Activated CD4-positive, alpha-beta memory T cell treated with anti-CD3 and anti-CD28 coated beads for 36 hours (primary cell): ENCODE measurements at regions of chr2 and their contacts with region 1.

Region 1: DNA sequence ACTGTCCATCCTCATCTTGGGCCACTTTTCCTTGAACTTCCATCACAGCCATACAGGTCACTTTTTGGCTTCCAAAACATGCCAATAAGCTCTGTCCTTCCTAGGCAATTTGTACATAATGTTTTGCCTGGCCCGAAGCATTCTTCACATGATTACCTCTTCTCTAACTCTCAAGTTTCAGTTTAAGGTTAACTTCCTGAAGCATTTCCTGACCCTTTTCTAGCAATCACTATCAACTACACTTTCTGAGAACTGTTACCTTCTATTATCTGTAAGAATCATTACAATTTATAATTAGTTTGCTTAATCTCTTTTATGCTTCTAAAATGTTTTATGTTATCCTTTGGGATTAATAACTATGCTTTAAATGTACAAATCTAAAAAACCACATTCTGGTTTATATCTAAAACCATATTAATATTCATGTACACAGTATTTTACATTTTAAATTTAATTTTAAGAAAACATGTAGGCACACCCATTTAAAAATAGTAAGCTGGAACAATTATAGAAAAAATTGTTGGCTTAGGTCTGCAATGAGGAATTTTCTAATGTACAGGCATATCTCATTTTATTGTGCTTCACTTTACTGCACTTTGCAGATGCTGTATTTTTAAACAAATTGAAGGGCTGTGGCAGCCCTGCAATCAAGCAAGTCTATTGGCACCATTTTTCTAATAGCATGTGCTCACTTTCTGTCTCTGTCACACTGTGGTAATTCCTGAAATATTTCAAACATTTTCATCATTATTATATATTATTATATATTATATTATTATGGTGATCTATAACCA is 76.4 kb downstream of the C2orf74 start:
- DNase-seq: no peak
- H3K4me3 Mint-ChIP-seq: no peak overlapping the region
- H3K27ac Mint-ChIP-seq: peak overlapping the region; percentile 52
- H3K4me1 Mint-ChIP-seq: peaks cover 22% of the 10 kb centered on the region
- H3K27me3 Mint-ChIP-seq: no peaks in the 10 kb centered on the region

Region 2: GRCh38 chr2:61144697-61145268 is 93.6 kb before region 1 on chr2:
- CTCF ChIA-PET with region 1: no interaction called
- POLR2A ChIA-PET with region 1: no interaction called
- intact Hi-C with region 1: loop called (anchors 1 kb)
- DNase-seq: peak; percentile 96
- H3K4me3 Mint-ChIP-seq: peak overlapping the region; percentile 91
- H3K27ac Mint-ChIP-seq: peak overlapping the region; percentile 85
- H3K4me1 Mint-ChIP-seq: peaks cover 3% of the 10 kb centered on the region
- H3K27me3 Mint-ChIP-seq: peaks cover 1% of the 10 kb centered on the region

Region 3: GRCh38 chr2:61262699-61263098 is 24.3 kb after region 1 on chr2:
- CTCF ChIA-PET with region 1: no interaction called
- POLR2A ChIA-PET with region 1: no interaction called
- intact Hi-C with region 1: loop called (anchors 1 kb)
- DNase-seq: no peak
- H3K4me3 Mint-ChIP-seq: no peak overlapping the region
- H3K27ac Mint-ChIP-seq: peak overlapping the region; percentile 42
- H3K4me1 Mint-ChIP-seq: peaks cover 5% of the 10 kb centered on the region
- H3K27me3 Mint-ChIP-seq: no peaks in the 10 kb centered on the region